Gastrocnemius medialis (tissue), 4 donors: ENCODE measurements at regions of chr1 and their contacts with region 1.

Region 1: GRCh38 chr1:41812051-41812450 is 106.7 kb downstream of the HIVEP3 start:
- DNase-seq: peak in 1 of 2 donors; percentile 60
- ATAC-seq: peak in 1 of 2 donors; percentile 36
- H3K4me3 ChIP-seq: no peak overlapping the region
- H3K27ac ChIP-seq: peak overlapping the region; percentile 50 to 79 (median 75)
- H3K4me1 ChIP-seq: peaks cover 40 to 44% of the 10 kb centered on the region in 2 donors
- H3K27me3 ChIP-seq: no peaks in the 10 kb centered on the region
- CTCF ChIP-seq: peak; percentile 42 to 68 (median 57)
- POLR2A ChIP-seq: no peak

Region 2: DNA sequence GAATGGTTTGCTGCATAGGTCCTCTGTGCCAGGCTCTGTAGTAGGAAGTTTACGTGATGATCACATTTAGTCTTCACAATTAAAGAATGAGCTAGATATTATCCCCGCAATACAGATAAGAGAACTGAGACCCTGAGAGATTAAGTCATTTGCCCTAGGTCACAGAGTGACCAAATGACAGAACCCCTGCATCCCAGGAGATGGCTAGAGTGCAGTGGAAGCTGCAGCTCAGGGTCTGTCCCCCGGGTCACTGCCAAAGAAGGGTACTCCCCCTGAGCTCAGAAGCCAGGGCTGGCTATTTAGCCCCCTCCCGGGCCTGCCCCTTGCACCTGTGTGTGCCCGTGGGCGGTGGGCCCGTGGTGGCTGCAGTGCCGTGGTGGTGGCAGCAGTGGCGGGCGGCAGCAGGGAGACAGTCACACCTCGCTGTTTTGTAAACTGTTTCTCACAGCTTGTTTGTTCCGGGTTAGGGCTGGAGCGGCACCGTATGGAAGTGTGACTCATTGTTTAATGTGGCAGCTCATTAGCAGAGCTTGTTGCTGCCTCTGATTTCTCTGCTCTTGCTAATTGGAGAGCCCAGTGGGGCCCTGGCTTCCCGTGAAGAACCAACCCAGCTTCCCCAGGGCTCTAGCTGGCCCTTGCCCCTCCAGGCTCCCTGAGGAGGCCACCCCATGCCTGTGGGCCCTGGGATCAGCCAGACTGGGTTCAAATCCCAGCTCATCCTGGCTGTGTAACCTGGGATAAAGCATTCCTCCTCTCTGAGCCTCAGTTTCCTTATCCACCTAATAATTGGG is 470.1 kb before region 1 on chr1:
- in situ Hi-C with region 1: no loop called
- intact Hi-C with region 1: no loop called
- DNase-seq: peak in 1 of 2 donors; percentile 71
- ATAC-seq: peak; percentile 62 to 81
- H3K4me3 ChIP-seq: peak overlapping the region in 1 of 4 donors; percentile 6
- H3K27ac ChIP-seq: peak overlapping the region; percentile 86 to 98 (median 92)
- H3K4me1 ChIP-seq: peaks cover 33% of the 10 kb centered on the region in 2 donors
- H3K27me3 ChIP-seq: no peaks in the 10 kb centered on the region
- CTCF ChIP-seq: peak in 1 of 5 experiments; percentile 9
- POLR2A ChIP-seq: no peak

Region 3: DNA sequence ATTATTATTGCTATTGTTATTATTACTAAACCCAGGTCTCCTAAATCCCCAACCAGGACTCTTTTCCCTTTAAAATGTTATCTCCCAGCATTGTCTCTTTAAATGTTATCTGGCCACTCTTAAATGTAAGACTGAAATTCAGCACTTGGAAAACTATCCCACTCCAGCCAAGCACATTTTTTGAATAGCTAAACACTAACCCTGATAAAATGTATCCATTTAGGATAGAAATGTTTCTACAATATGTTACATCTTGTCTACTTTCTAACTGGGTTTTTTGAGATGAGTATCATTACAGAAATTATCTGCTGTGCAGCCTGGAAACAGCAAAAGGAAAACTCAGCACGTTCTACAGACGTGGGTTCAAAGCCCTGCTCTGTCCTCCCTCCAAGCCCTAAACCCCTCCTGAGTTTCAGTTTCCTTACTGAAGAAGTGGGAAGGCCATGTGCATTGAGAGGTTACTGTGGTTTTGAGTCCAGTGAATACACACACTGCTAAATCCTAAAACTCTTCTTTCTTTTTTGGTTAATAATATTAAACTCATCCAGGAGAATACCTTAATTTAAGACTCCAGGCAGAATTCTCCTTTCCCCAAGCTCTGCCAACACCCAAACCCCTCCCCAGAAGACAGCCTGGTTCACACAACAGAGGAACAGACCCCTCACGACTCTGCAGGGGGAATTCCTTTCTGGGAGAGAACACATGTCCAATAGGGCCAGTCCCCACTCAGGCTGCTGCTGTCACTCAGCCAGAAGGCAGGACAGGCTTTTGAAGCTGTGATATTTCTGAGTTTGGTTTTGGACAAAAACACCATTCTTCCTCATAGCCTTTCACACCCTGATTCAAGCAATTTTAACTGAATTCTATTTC is 64.8 kb after region 1 on chr1:
- in situ Hi-C with region 1: no loop called
- intact Hi-C with region 1: loop called (anchors 5 kb)
- DNase-seq: no peak
- ATAC-seq: no peak
- H3K4me3 ChIP-seq: no peak overlapping the region
- H3K27ac ChIP-seq: peak overlapping the region; percentile 47 to 81 (median 70)
- H3K4me1 ChIP-seq: peaks cover 46 to 49% of the 10 kb centered on the region in 2 donors
- H3K27me3 ChIP-seq: no peaks in the 10 kb centered on the region
- CTCF ChIP-seq: no peak
- POLR2A ChIP-seq: no peak